ENCODE measurements at regions of chr17 and their contacts with region 1.

Region 1: DNA sequence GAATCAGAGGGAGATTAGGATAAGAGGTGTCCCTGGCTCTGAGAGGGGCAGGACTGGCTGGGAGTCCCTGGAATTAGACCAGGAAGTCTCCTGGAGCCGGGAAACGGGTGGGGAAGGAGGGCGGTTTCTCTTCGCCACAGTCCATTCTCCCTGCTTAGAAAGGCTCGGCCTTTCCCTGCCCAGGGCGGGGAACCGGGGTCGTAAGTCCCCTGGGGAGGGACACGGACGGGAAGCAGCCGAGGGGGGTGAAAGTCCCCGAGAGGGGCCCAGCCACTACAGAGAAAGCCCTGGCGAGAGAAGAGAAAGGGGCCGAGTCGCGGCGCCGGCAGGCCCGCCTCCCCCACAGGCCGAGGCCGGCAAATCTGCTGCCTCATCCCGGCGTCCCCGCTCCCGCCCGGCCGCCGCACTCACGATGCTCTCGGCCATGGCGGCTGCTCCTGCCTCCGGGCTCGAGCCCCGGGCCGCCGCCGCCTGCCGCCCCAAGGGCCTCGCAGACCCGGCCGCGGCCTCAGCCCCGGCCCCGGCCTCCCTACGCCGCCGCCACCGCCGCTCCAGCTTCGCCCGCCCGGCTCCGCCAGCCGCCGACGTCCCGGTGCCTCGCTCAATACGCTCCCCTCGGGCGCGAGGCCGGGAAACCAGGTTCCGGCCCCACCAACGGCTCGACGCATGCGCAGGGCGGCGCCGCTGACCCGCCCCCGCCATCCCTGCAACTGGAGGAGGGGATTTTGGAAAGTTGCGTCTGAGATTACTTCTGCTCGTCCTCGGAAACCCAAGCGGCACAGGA is at the starts of genes NPLOC4 and TSPAN10:
- DNase-seq: peak; percentile 49
- ATAC-seq: peak; percentile 90
- H3K4me3 ChIP-seq: peak within 1 kb of the TSS; percentile 90
- H3K27ac ChIP-seq: peak within 1 kb of the TSS; percentile 80
- H3K4me1 ChIP-seq: peaks cover 4% of the 10 kb centered on the region
- H3K27me3 ChIP-seq: no peaks in the 10 kb centered on the region
- CTCF ChIP-seq: no peak
- EP300 ChIP-seq: no peak
- POLR2A ChIP-seq: peak; percentile 87
- RAD21 ChIP-seq: 0 out of 2 replicates have a peak, but pooled peaks have one; percentile 10
- polyA plus RNA-seq, gene NPLOC4: 1.5 to 2.5 TPM
- polyA plus RNA-seq, gene TSPAN10: 0.33 to 0.45 TPM

Region 2: GRCh38 chr17:81621494-81622130 is 15.1 kb before region 1 on chr17:
- CTCF ChIA-PET with region 1: no interaction called
- POLR2A ChIA-PET with region 1: no interaction called
- RAD21 ChIA-PET with region 1: no interaction called
- SMC1A ChIA-PET with region 1: no interaction called
- in situ Hi-C with region 1: no loop called
- intact Hi-C with region 1: no loop called
- DNase-seq: no peak
- ATAC-seq: no peak
- H3K4me3 ChIP-seq: no peak overlapping the region
- H3K27ac ChIP-seq: no peak overlapping the region
- H3K4me1 ChIP-seq: no peaks in the 10 kb centered on the region
- H3K27me3 ChIP-seq: no peaks in the 10 kb centered on the region
- CTCF ChIP-seq: no peak
- EP300 ChIP-seq: no peak
- POLR2A ChIP-seq: no peak
- RAD21 ChIP-seq: no peak

Region 3: GRCh38 chr17:81666342-81667191 is 29.9 kb after region 1 on chr17 and contains the starts of genes CCDC137 and OXLD1:
- CTCF ChIA-PET with region 1: no interaction called
- POLR2A ChIA-PET with region 1: interaction called, 12 read pairs
- RAD21 ChIA-PET with region 1: interaction called, 3 read pairs
- SMC1A ChIA-PET with region 1: no interaction called
- in situ Hi-C with region 1: no loop called
- intact Hi-C with region 1: loop called (anchors 2 kb)
- DNase-seq: peak; percentile 76
- ATAC-seq: peak; percentile 98
- H3K4me3 ChIP-seq: peak within 1 kb of the TSS; percentile 98
- H3K27ac ChIP-seq: peak within 1 kb of the TSS; percentile 97
- H3K4me1 ChIP-seq: peaks cover 15% of the 10 kb centered on the region
- H3K27me3 ChIP-seq: no peaks in the 10 kb centered on the region
- CTCF ChIP-seq: no peak
- EP300 ChIP-seq: no peak
- POLR2A ChIP-seq: peak; percentile 99
- RAD21 ChIP-seq: no peak
- polyA plus RNA-seq, gene CCDC137: 2.2 to 5.1 TPM
- polyA plus RNA-seq, gene OXLD1: 4.6 to 9.3 TPM

Region 4: GRCh38 chr17:81794509-81794908 is 157.8 kb after region 1 on chr17:
- CTCF ChIA-PET with region 1: no interaction called
- POLR2A ChIA-PET with region 1: no interaction called
- RAD21 ChIA-PET with region 1: no interaction called
- SMC1A ChIA-PET with region 1: no interaction called
- in situ Hi-C with region 1: no loop called
- intact Hi-C with region 1: no loop called
- DNase-seq: no peak
- ATAC-seq: no peak; the same call in 1 of the 3 replicates
- H3K4me3 ChIP-seq: no peak overlapping the region
- H3K27ac ChIP-seq: no peak overlapping the region
- H3K4me1 ChIP-seq: no peaks in the 10 kb centered on the region
- H3K27me3 ChIP-seq: no peaks in the 10 kb centered on the region
- CTCF ChIP-seq: no peak
- EP300 ChIP-seq: no peak
- POLR2A ChIP-seq: no peak
- RAD21 ChIP-seq: no peak